AG04450 (cell line): ENCODE measurements at regions of chr1 and their contacts with region 1.

Region 1: GRCh38 chr1:32702599-32703478 is at the start of gene SYNC:
- DNase-seq: peak; percentile 63
- H3K4me3 ChIP-seq: peak within 1 kb of the TSS; percentile 81
- H3K27ac ChIP-seq: peak within 1 kb of the TSS; percentile 99
- H3K27me3 ChIP-seq: no peaks in the 10 kb centered on the region
- CTCF ChIP-seq: no peak
- polyA plus RNA-seq, gene SYNC: 50.4 and 65.1 TPM in 2 replicates

Region 2: DNA sequence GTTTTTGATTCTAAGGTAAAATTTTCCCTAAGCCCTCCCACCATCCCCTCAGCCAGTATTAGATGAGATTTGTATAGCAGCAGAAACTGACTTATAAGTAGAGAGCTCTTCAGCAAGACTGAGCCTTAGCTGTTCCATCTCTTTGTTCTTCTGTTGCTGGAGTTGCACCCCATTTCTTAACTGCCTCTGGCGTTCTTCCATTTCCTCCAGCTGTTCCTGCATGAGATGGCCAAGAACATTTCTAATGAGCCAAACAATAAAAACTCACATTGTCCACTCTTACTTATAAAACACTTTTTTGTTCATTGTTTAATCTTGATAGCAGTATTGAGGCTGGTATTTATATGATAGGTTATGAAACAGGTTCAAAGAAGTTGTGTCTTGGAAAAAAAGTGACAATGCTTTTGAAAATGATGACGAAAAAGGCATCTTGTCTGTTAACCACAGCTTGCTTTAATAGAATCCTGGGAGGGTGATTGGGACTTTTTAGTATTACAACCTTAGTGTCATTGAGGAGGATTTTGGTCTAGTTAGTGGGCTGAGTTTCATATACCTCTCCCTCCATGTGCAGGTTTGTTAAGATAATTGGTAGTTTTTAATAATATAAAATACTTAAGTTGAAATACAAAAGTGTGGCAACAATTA is 18.6 kb before region 1 on chr1:
- CTCF ChIA-PET with region 1: interaction called, 3 read pairs
- POLR2A ChIA-PET with region 1: interaction called, 40 read pairs
- DNase-seq: peak; percentile 55
- H3K4me3 ChIP-seq: no peak overlapping the region
- H3K27ac ChIP-seq: peak overlapping the region; percentile 70
- H3K27me3 ChIP-seq: no peaks in the 10 kb centered on the region
- CTCF ChIP-seq: no peak

Region 3: DNA sequence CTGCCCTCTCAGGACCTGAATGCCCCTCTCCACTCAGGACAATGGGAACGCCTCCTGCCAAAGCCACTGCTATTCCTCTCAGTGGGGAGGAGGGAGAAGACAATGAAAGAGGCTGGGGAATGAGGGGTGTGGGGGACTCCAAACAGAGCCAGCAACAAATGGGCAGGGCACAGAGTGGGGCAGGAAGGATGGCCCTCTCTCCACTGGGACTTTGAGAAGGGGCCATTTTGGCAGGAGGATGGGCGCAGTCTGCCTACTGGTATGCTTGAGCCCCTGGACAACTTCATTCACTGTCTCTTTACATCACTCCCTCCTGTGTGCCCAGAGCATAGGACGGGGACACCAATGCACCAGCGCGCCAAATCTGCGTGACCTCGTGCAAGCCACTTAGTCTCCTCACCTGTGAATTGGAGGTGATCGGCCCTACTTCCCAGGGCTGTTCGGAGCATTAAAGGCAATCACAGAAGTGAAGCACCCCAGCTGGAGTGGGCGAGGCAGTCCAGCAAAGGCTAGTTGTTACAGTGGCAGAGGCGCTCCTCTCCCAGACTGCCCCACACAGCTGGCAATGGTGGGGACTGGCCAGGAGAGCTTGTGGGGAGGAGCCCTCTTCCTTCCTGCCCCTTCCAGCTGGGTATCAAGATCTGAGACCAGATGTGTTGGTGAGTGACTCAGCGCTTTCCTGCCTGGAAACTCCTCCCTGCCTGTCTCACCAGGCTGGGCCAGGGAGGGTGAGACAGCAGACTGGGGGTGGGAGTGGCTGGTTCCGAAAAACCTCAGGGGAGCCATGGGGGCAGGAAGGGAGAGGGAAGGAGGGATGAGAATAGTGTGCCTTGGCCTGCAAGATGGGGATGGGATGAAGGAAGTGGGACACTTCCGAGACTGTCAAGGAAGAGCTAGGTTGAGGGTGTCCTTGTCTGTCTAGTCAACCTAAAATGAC is 22.1 kb after region 1 on chr1:
- CTCF ChIA-PET with region 1: no interaction called
- POLR2A ChIA-PET with region 1: interaction called, 11 read pairs
- DNase-seq: peak; percentile 88
- H3K4me3 ChIP-seq: peak overlapping the region; percentile 20; the same call in 1 of the 2 replicates
- H3K27ac ChIP-seq: peak overlapping the region; percentile 68
- H3K27me3 ChIP-seq: no peaks in the 10 kb centered on the region
- CTCF ChIP-seq: no peak

Region 4: GRCh38 chr1:32773018-32773763 is 70.4 kb after region 1 on chr1:
- CTCF ChIA-PET with region 1: interaction called, 23 read pairs
- POLR2A ChIA-PET with region 1: interaction called, 6 read pairs
- DNase-seq: peak; percentile 47
- H3K4me3 ChIP-seq: no peak overlapping the region
- H3K27ac ChIP-seq: no peak overlapping the region
- H3K27me3 ChIP-seq: peaks cover 2% of the 10 kb centered on the region
- CTCF ChIP-seq: peak; percentile 97

Region 5: DNA sequence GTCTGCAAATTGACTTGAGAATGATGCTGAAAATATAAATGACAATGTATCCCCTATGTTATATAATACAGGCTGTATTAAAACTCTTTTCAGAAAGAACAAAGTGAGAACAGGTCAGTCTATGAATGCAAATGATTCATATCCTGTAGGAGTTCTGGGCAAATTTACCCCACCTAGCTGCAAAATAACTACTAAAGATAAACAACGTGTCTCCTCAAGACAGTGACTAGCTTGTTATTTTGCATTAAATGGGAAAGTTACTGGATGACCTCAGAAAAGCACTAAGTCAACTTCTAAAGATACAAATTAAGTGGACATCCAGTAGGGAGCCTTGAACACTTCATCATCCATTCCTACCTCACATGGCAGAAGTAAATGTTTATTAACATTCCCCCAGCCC is 250.7 kb after region 1 on chr1:
- CTCF ChIA-PET with region 1: no interaction called
- POLR2A ChIA-PET with region 1: no interaction called
- DNase-seq: no peak
- H3K4me3 ChIP-seq: no peak overlapping the region
- H3K27ac ChIP-seq: no peak overlapping the region
- H3K27me3 ChIP-seq: no peaks in the 10 kb centered on the region
- CTCF ChIP-seq: 0 out of 2 replicates have a peak, but pooled peaks have one; percentile 2